Activated T-helper 1 cell treated with anti-CD3 and anti-CD28 coated beads, Interleukin-12 subunit alpha, Interleukin-12 subunit beta, Interleukin-2, Interleukin-4 antibody, amounts not matched to agents 30 ng/mL and 10 ng/mL and 1 ng/mL, durations not matched to agents 14 hours and 24 hours and 36 hours (primary cell): ENCODE measurements at regions of chr11 and their contacts with region 1.

Region 1: DNA sequence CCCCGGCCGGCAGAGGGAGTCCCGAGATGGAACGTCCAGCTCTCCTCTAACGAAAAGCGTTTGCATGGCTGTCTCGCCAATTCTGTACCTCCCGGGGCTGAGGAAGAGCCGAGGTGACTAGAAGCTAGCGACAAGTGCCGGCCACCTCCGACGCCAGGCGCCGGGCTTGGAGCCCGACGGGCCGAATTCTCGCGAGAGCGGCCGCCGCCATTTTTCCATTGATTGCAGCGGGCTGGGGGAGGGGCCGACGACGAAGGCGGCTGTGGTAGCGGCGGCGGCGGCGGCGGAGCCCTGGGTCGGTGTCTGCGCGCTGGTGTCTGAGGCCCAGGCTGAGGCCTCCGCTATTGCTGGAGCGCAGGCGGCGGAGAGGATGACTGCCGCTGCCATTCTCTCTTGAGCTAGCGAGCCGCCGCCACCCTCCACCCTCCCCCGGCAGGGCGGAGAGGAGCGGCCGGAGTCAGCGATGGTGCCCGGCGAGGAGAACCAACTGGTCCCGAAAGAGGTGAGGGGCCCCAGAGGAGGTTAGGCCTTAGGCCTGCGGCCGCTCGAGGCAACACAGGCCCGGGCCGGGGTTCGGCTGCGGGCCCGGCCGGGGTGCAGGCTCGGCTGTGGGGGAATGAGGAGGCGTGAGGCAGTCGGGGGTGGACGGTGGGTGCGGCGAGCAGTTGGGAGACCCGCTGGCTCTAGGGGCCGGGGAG is at the start of gene USP47:
- DNase-seq: peak; percentile 90
- H3K4me3 Mint-ChIP-seq: peak within 1 kb of the TSS; percentile 65
- H3K27ac Mint-ChIP-seq: peak within 1 kb of the TSS; percentile 59
- H3K4me1 Mint-ChIP-seq: peaks cover 1% of the 10 kb centered on the region
- H3K27me3 Mint-ChIP-seq: peaks cover 8% of the 10 kb centered on the region
- total RNA-seq, gene USP47: 52.0 and 54.8 TPM in 2 replicates

Region 2: GRCh38 chr11:10540923-10541560 is 1300.8 kb before region 1 on chr11 and contains the start of gene RNF141:
- intact Hi-C with region 1: loop called (anchors 5 kb)
- DNase-seq: peak; percentile 92
- H3K4me3 Mint-ChIP-seq: peak within 1 kb of the TSS; percentile 90
- H3K27ac Mint-ChIP-seq: peak within 1 kb of the TSS; percentile 73
- H3K4me1 Mint-ChIP-seq: peaks cover 29% of the 10 kb centered on the region
- H3K27me3 Mint-ChIP-seq: peaks cover 5% of the 10 kb centered on the region
- total RNA-seq, gene RNF141: 12.4 and 13.2 TPM in 2 replicates

Region 3: GRCh38 chr11:10857709-10858438 is 984.0 kb before region 1 on chr11 and contains the start of gene ZBED5:
- intact Hi-C with region 1: loop called (anchors 2 kb)
- DNase-seq: peak; percentile 94
- H3K4me3 Mint-ChIP-seq: peak within 1 kb of the TSS; percentile 100
- H3K27ac Mint-ChIP-seq: peak within 1 kb of the TSS; percentile 100
- H3K4me1 Mint-ChIP-seq: peaks cover 46% of the 10 kb centered on the region
- H3K27me3 Mint-ChIP-seq: no peaks in the 10 kb centered on the region
- total RNA-seq, gene ZBED5: 38.9 and 42.2 TPM in 2 replicates

Region 4: DNA sequence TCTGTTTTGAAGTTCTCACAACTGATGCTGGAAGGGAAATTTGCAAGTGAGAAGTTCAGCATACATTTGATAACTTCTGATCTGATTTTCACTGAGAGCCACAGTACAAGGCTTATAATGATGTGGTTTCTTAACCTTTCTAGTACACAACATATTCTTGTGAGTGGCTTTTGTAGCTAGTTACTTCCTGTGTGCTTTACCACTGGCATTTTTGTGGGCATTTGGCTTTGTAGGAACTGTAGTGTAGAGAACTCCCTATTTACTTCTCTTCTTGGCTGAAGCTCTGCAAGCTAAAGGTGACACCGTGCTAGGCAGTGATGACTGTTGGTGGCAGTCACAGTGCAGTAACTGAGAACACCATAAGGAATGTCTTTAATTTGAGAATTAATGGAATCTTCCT is 14.8 kb after region 1 on chr11:
- intact Hi-C with region 1: loop called (anchors 1 kb)
- DNase-seq: no peak
- H3K4me3 Mint-ChIP-seq: no peak overlapping the region
- H3K27ac Mint-ChIP-seq: no peak overlapping the region
- H3K4me1 Mint-ChIP-seq: peaks cover 45% of the 10 kb centered on the region
- H3K27me3 Mint-ChIP-seq: no peaks in the 10 kb centered on the region

Region 5: DNA sequence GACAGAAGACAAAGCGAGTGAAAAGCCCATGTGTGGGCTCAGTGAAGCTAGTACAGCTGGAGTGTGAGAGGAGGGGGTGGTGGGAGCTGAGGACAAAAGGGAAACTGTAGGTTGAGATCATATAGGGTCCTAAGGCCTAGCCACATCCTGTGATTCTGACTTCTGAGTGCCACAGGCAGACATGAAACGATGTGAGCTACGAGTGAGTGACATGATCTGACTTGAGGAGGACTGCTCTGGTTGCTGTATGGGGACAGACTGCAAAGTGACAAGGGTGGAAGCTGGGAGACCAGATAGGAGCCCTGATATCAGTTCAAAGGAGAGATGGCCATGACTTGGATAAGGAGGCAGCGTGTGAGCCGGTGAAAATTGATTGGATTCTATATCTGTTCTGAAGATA is 353.9 kb after region 1 on chr11:
- intact Hi-C with region 1: loop called (anchors 5 kb)
- DNase-seq: peak; percentile 62
- H3K4me3 Mint-ChIP-seq: peak overlapping the region; percentile 97
- H3K27ac Mint-ChIP-seq: peak overlapping the region; percentile 96
- H3K4me1 Mint-ChIP-seq: peaks cover 69% of the 10 kb centered on the region
- H3K27me3 Mint-ChIP-seq: no peaks in the 10 kb centered on the region

Region 6: DNA sequence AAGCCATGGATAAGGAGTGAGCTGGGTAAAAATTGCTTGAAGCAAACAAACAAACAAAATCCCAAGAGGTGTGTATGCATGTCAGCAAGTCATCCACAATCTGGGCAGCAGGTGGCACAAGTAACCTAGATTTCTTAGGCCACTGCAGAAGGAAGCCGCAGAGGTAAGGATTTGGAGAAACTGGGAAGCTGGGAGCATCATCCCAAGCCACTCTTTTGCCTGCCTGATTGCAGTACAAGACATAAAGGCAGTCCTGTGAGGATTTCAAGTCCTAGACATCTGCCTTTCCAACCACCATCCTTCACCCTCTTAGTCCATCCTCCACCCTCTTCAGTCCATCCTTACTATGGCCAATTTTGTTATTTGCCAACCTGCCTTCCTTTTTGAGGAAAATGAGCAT is 1368.6 kb after region 1 on chr11:
- intact Hi-C with region 1: loop called (anchors 5 kb)
- DNase-seq: no peak
- H3K4me3 Mint-ChIP-seq: no peak overlapping the region
- H3K27ac Mint-ChIP-seq: no peak overlapping the region
- H3K4me1 Mint-ChIP-seq: peaks cover 25% of the 10 kb centered on the region
- H3K27me3 Mint-ChIP-seq: no peaks in the 10 kb centered on the region

Region 7: DNA sequence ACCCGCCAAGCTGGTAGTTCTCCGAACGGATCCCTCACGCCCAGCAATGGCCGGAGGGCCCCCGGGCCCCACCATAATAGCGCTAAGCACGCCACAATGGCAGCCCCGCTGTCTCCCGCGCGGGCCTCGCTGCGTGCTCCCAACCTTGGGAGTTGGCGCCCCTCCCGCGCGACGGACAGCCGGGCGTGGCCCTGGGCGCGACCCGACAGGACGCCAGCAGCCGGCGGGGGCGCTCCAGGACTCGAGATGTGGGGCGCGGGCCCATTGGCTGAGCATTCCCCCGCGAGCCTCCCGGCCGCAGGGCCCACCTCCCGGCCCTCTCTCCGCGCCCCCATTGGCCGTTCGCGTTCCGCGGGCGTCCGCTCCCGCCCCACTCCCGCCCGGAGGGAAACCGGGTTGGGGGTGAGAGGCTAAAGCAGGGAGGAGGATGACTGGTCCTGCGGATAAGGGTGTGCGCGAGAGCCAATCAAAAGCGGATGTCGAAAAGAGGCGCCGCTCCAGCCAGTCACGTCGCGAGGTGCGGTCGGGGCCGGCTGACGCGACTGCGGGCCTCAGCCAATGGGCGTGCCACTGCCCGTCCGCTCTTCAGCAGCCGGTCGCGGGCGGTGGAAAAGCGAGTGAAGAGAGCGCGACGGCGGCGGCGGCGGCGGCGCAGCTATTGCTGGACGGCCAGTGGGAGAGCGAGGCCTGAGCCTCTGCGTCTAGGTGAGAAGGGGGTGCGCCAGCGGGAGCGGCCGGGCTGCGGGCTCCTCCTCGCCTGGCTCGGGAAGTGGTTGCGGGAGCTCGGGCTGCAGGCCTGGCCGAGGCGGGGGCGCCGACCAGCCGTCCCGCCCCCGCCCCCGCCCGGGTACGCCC is 1826.5 kb after region 1 on chr11 and contains the start of gene FAR1:
- intact Hi-C with region 1: loop called (anchors 2 kb)
- DNase-seq: peak; percentile 97
- H3K4me3 Mint-ChIP-seq: peak within 1 kb of the TSS; percentile 98
- H3K27ac Mint-ChIP-seq: peak within 1 kb of the TSS; percentile 99
- H3K4me1 Mint-ChIP-seq: peaks cover 42% of the 10 kb centered on the region
- H3K27me3 Mint-ChIP-seq: peaks cover 17% of the 10 kb centered on the region
- total RNA-seq, gene FAR1: 67.3 and 67.4 TPM in 2 replicates